Activated naive CD4-positive, alpha-beta T cell treated with anti-CD3 and anti-CD28 coated beads for 36 hours (primary cell): ENCODE measurements at regions of chr1 and their contacts with region 1.

Region 1: GRCh38 chr1:27671964-27672749 is at the start of gene IFI6:
- DNase-seq: peak; percentile 89
- H3K4me3 Mint-ChIP-seq: peak within 1 kb of the TSS; percentile 95
- H3K27ac Mint-ChIP-seq: peak within 1 kb of the TSS; percentile 91
- H3K4me1 Mint-ChIP-seq: peaks cover 30% of the 10 kb centered on the region
- H3K27me3 Mint-ChIP-seq: no peaks in the 10 kb centered on the region
- total RNA-seq, gene IFI6: 115 to 125 TPM

Region 2: GRCh38 chr1:27725374-27726173 is 53.4 kb after region 1 on chr1 and contains the start of gene FAM76A:
- CTCF ChIA-PET with region 1: interaction called, 8 read pairs
- intact Hi-C with region 1: loop called (anchors 1 kb)
- DNase-seq: peak; percentile 100
- H3K4me3 Mint-ChIP-seq: peak within 1 kb of the TSS; percentile 86
- H3K27ac Mint-ChIP-seq: peak within 1 kb of the TSS; percentile 80
- H3K4me1 Mint-ChIP-seq: peaks cover 12% of the 10 kb centered on the region
- H3K27me3 Mint-ChIP-seq: no peaks in the 10 kb centered on the region
- total RNA-seq, gene FAM76A: 8.4 to 9.7 TPM